A549 (cell line): ENCODE measurements at regions of chr6 and their contacts with region 1.

Region 1: DNA sequence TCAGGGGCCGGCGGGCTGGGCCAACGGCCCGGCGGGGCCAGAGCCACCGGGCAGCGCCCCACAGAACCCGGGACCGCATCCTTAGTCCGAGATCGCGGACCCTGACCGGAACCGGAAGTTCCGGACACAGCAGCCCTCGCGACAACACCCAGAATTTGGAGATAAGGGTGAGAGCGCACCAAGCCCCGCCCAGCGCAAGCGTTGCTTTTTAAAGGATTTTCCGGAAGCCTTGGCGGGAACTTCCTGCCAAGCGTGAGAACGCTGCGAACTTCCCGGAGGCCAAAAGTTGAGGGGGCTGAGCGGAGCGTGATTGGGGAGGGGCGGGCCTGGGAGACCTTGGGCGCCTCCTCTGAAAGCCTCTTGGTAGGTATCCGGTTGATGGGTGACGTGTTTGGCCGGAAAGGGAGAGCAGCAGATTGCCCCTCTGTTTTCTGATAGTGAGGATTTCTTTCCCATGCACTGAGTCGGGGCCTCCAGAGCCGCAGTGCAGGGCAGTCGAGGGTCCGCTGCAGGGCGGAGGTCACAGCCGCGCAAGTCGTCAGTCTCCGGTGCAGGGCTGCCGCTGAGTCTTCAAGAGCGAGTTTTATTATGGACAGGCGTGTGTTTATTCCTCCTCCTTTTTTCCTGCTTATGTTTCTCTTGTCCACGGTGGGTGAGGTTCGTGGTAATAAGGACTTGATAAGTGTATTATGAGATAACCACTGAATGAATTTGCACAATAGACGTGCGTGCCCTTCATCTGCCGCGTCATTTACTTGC is at the start of gene MTRF1L:
- DNase-seq: peak; percentile 79 to 94
- ATAC-seq: peak; percentile 98
- H3K4me3 ChIP-seq: peak within 1 kb of the TSS; percentile 77
- H3K27ac ChIP-seq: peak within 1 kb of the TSS; percentile 84 to 88
- H3K4me1 ChIP-seq: peaks cover 27% of the 10 kb centered on the region; the same call in 2 of the 3 replicates
- CTCF ChIP-seq: no peak
- EP300 ChIP-seq: no peak
- POLR2A ChIP-seq: no peak; the same call in 1 of the 2 replicates
- RAD21 ChIP-seq: no peak
- polyA plus RNA-seq, gene MTRF1L: 17.0 and 22.6 TPM in 2 replicates

Region 2: DNA sequence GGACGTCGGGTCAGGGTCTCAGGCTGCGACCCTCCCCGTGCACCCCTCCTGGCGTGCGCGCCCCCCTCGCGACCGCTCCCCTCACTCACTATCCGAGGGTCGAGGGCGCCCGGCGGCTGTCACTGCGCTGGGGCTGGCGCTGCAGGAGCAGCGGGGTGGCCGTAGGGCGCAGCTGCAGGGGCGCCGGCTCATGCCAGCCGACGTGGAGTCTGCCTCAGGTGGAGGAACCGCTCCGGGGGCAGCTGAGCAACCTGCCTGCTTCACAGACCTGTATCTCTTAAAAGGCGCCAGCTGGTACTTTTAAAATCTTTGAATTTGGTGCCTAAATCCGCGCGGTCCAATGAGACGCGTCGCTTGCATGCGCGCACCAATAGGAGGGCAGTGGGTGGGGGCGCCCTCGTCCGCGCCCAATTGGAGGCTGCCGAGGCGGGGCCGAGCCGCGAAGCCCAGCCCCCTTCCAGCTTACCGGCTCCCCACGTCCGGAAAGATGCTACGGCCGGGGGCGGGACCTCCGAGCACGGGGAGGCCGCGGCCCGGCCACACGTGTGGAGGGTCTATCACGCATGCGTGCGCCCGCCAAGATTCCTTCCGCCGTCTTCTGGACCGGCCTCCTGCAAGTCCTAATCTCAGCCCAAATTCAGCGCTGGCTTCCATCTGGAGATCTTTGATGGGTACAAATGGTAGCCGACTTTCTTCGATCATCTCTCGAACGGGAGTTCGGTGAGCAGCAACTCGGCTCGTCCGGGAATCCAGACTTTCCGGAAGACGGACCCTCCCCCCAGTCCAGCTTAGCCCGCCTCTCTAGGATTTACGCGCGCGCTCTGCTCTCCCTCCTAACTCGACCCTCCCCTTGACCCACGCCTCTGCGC is 19.8 kb before region 1 on chr6 and contains the start of gene FBXO5:
- CTCF ChIA-PET with region 1: interaction called, 3 read pairs
- POLR2A ChIA-PET with region 1: interaction called, 11 read pairs
- DNase-seq: peak; percentile 70 to 97
- ATAC-seq: peak; percentile 88 to 94
- H3K4me3 ChIP-seq: peak within 1 kb of the TSS; percentile 69
- H3K27ac ChIP-seq: peak within 1 kb of the TSS; percentile 91 to 96
- H3K4me1 ChIP-seq: peaks cover 39% of the 10 kb centered on the region
- CTCF ChIP-seq: no peak
- EP300 ChIP-seq: no peak
- POLR2A ChIP-seq: peak; percentile 40
- RAD21 ChIP-seq: no peak
- polyA plus RNA-seq, gene FBXO5: 20.7 and 29.2 TPM in 2 replicates